ENCODE measurements at regions of chr17 and their contacts with region 1.

Region 1: DNA sequence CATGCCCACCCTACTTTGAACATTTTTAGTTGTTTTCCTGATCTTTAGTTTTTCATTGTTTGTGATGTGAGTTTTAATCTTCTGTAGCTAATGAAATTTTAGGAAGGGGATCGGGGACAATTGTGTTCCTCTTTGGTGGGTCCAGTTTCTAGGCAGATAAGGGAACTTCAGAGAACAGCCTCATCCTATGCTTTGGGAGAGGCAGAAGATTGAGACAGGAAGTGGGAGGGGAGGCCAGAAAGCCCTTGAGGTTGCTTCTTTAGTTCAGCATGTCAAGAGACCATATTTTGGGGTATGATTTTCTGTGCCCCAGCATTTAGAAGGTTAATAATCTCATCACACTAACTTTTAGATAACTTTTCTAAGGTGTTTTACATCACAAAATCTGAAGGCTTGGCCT is 191.0 kb downstream of the TANC2 start:
- DNase-seq: no peak
- ATAC-seq: no peak
- H3K4me3 ChIP-seq: no peak overlapping the region
- H3K4me3 Mint-ChIP-seq: no peak overlapping the region
- H3K27ac ChIP-seq: no peak overlapping the region
- H3K27ac Mint-ChIP-seq: no peak overlapping the region
- H3K4me1 ChIP-seq: peaks cover 0 to 6% of the 10 kb centered on the region in 2 donors
- H3K4me1 Mint-ChIP-seq: peaks cover 15% of the 10 kb centered on the region
- H3K27me3 ChIP-seq: no peaks in the 10 kb centered on the region
- H3K27me3 Mint-ChIP-seq: no peaks in the 10 kb centered on the region
- CTCF ChIP-seq: no peak

Region 2: GRCh38 chr17:62860907-62861848 is 295.8 kb before region 1 on chr17:
- CTCF ChIA-PET with region 1: no interaction called
- POLR2A ChIA-PET with region 1: no interaction called
- intact Hi-C with region 1: no loop called
- DNase-seq: no peak
- ATAC-seq: no peak
- H3K4me3 ChIP-seq: no peak overlapping the region
- H3K4me3 Mint-ChIP-seq: no peak overlapping the region
- H3K27ac ChIP-seq: no peak overlapping the region
- H3K27ac Mint-ChIP-seq: no peak overlapping the region
- H3K4me1 ChIP-seq: no peaks in the 10 kb centered on the region
- H3K4me1 Mint-ChIP-seq: no peaks in the 10 kb centered on the region
- H3K27me3 ChIP-seq: peaks cover 0 to 5% (median 1%) of the 10 kb centered on the region in 4 experiments
- H3K27me3 Mint-ChIP-seq: peaks cover 34% of the 10 kb centered on the region
- CTCF ChIP-seq: no peak

Region 3: GRCh38 chr17:63171428-63172393 is 14.7 kb after region 1 on chr17:
- CTCF ChIA-PET with region 1: no interaction called
- POLR2A ChIA-PET with region 1: interaction called, 17 read pairs
- intact Hi-C with region 1: no loop called
- DNase-seq: no peak
- ATAC-seq: no peak
- H3K4me3 ChIP-seq: no peak overlapping the region
- H3K4me3 Mint-ChIP-seq: no peak overlapping the region
- H3K27ac ChIP-seq: no peak overlapping the region
- H3K27ac Mint-ChIP-seq: no peak overlapping the region
- H3K4me1 ChIP-seq: no peaks in the 10 kb centered on the region
- H3K4me1 Mint-ChIP-seq: no peaks in the 10 kb centered on the region
- H3K27me3 ChIP-seq: no peaks in the 10 kb centered on the region
- H3K27me3 Mint-ChIP-seq: peaks cover 2% of the 10 kb centered on the region
- CTCF ChIP-seq: no peak